WTC11 (cell line): ENCODE measurements at regions of chr22 and their contacts with region 1.

Region 1: GRCh38 chr22:18001040-18001893 is 23.1 kb downstream of the MICAL3 start:
- DNase-seq: peak; percentile 86
- ATAC-seq: peak; percentile 87
- H3K4me3 Mint-ChIP-seq: peak overlapping the region; percentile 78
- H3K27ac Mint-ChIP-seq: peak overlapping the region; percentile 99
- H3K4me1 Mint-ChIP-seq: peaks cover 10% of the 10 kb centered on the region
- H3K27me3 Mint-ChIP-seq: peaks cover 4% of the 10 kb centered on the region
- CTCF ChIP-seq: no peak

Region 2: GRCh38 chr22:18024276-18024947 is 23.1 kb after region 1 on chr22 and contains the start of gene MICAL3:
- CTCF ChIA-PET with region 1: interaction called, 13 read pairs
- POLR2A ChIA-PET with region 1: interaction called, 6 read pairs
- DNase-seq: peak; percentile 38
- ATAC-seq: peak; percentile 55
- H3K4me3 Mint-ChIP-seq: peak within 1 kb of the TSS; percentile 91
- H3K27ac Mint-ChIP-seq: no peak within 1 kb of the TSS
- H3K4me1 Mint-ChIP-seq: peaks cover 16% of the 10 kb centered on the region
- H3K27me3 Mint-ChIP-seq: peaks cover 73% of the 10 kb centered on the region
- CTCF ChIP-seq: no peak; the same call in 1 of the 2 replicates
- total RNA-seq, gene MICAL3: 35.6 to 41.2 TPM (median 38.8 TPM) in 3 replicates